ENCODE measurements at regions of chr19 and their contacts with region 1.

Region 1: DNA sequence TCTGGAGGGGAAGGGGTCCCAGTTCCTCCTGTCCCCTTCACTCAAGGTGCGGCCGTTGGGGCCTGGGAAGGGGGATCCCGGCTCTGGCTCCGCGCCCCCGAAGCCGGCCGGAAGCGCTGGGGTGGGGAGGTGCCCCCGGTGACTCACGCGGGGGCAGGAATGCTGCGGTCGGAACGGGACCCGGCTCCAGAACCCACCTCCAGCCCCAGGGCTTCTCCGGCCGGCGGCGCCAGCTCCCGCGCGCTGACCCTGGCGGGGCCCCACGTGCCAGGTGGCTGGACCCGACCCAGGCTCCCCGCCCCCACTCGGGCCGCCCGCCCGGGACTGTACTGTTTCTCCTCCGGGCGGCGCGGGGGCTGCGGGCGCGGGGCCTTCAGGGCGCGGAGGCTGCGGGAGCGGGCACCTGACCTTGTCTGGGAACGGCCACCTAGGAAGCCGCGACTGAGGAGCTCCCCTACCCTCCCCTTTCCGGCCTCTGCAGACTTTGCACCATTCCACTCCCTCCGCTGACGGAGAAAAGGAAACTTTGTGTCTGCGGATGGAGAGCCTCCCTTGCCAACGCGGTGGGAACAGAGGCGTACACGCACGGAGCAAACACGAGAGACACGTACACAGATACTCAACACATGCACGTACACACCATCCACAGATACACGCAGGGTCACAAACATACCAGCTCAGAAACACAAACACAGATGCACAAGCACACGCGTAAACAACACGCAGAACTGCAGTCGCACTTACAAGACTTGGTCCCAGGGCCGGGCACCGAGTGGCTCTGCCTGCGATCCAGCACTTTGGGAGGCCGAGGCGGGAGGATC is 7.2 kb downstream of the AXL start:
- DNase-seq: peak; percentile 75 to 97
- H3K4me3 ChIP-seq: peak overlapping the region; percentile 61
- H3K27ac ChIP-seq: peak overlapping the region; percentile 78
- H3K4me1 ChIP-seq: peaks cover 52% of the 10 kb centered on the region
- H3K27me3 ChIP-seq: no peaks in the 10 kb centered on the region
- CTCF ChIP-seq: no peak

Region 2: DNA sequence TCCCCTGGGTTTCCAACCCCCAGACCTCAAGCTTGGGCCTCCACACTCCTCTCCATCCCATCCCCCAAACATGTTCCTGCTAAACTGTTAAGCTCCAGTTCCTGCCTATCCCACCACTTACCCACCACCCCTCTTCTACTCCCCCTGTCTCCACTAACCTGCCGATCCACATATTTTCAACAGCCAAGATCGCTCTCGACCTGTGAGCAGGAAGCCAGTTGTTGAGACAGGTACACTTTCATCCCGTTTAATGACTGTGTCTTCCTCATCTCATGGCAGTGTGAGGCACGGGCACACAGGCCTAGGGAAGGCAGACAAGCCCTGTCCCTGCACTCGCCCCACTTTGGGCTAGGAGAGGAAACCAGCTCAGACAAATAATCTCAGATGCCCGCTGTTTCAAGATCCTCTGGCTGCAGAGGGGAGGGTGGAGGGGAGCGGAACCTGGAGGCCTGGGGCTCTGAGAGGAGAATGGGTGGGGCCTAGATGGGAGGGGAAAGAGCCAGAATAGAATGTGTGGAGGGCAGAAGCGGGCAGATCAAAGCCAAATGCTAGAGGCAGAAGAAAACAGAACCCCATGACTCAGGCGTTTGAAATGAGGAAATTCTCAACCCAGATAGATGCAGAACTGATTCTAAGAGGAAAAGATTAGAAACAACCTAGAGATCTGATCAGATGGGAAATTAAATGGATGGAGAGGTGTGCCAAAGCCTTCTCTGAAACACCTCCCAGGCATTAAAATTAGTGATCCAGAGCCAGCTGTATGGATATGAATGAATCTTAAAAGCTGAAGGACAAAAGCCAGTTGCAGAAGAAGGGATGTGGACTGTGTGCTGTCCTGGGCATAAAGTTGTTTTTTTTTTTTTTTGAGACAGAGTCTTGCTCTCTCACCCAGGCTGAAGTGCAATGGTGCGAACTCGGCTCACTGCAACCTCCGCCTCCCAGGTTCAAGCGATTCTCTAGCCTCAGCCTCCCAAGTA is 50.2 kb before region 1 on chr19:
- CTCF ChIA-PET with region 1: no interaction called
- POLR2A ChIA-PET with region 1: no interaction called
- intact Hi-C with region 1: loop called (anchors 2 kb)
- DNase-seq: peak; percentile 90 to 95
- H3K4me3 ChIP-seq: peak overlapping the region; percentile 35
- H3K27ac ChIP-seq: peak overlapping the region; percentile 74
- H3K4me1 ChIP-seq: peaks cover 38% of the 10 kb centered on the region
- H3K27me3 ChIP-seq: no peaks in the 10 kb centered on the region
- CTCF ChIP-seq: no peak

Measured in PC-9 (cell line).